Posterior vena cava (tissue), 2 donors: ENCODE measurements at regions of chr9 and their contacts with region 1.

Region 1: GRCh38 chr9:35844716-35845270 is 15.8 kb downstream of the TMEM8B start:
- DNase-seq: peak; percentile 25

Region 2: GRCh38 chr9:35102926-35103659 is 741.7 kb before region 1 on chr9 and contains the start of gene STOML2:
- intact Hi-C with region 1: loop called in 1 of 2 experiments (anchors 10 kb)
- DNase-seq: peak; percentile 98
- total RNA-seq, gene STOML2: 67.9 to 71.6 TPM